MCF 10A (cell line): ENCODE measurements at regions of chr1 and their contacts with region 1.

Region 1: GRCh38 chr1:220914283-220915116 is 35.3 kb downstream of the HLX start:
- DNase-seq: no peak
- H3K4me3 Mint-ChIP-seq: no peak overlapping the region
- H3K27ac Mint-ChIP-seq: no peak overlapping the region
- H3K4me1 Mint-ChIP-seq: no peaks in the 10 kb centered on the region
- H3K27me3 Mint-ChIP-seq: no peaks in the 10 kb centered on the region
- CTCF ChIP-seq: no peak

Region 2: GRCh38 chr1:220957233-220957605 is 42.7 kb after region 1 on chr1:
- CTCF ChIA-PET with region 1: interaction called, 10 read pairs
- POLR2A ChIA-PET with region 1: no interaction called
- intact Hi-C with region 1: no loop called
- DNase-seq: peak; percentile 97
- H3K4me3 Mint-ChIP-seq: peak overlapping the region; percentile 33
- H3K27ac Mint-ChIP-seq: peak overlapping the region; percentile 89
- H3K4me1 Mint-ChIP-seq: peaks cover 21% of the 10 kb centered on the region
- H3K27me3 Mint-ChIP-seq: no peaks in the 10 kb centered on the region
- CTCF ChIP-seq: no peak